Natural killer cell (primary cell): ENCODE measurements at regions of chr4 and their contacts with region 1.

Region 1: GRCh38 chr4:67871867-67872266 is 11.9 kb downstream of the TMPRSS11D start:
- DNase-seq: peak in 1 of 2 donors; percentile 2
- ATAC-seq: peak; percentile 76 to 93 (median 81)
- H3K4me3 ChIP-seq: no peak overlapping the region
- H3K4me3 Mint-ChIP-seq: no peak overlapping the region
- H3K27ac ChIP-seq: no peak overlapping the region
- H3K27ac Mint-ChIP-seq: no peak overlapping the region
- H3K4me1 ChIP-seq: no peaks in the 10 kb centered on the region
- H3K4me1 Mint-ChIP-seq: no peaks in the 10 kb centered on the region
- H3K27me3 ChIP-seq: no peaks in the 10 kb centered on the region
- H3K27me3 Mint-ChIP-seq: no peaks in the 10 kb centered on the region
- CTCF ChIP-seq: peak; percentile 60

Region 2: GRCh38 chr4:67483868-67484602 is 387.8 kb before region 1 on chr4:
- intact Hi-C with region 1: no loop called
- DNase-seq: no peak
- ATAC-seq: peak in 1 of 3 donors; percentile 18
- H3K4me3 ChIP-seq: no peak overlapping the region
- H3K4me3 Mint-ChIP-seq: no peak overlapping the region
- H3K27ac ChIP-seq: no peak overlapping the region
- H3K27ac Mint-ChIP-seq: no peak overlapping the region
- H3K4me1 ChIP-seq: no peaks in the 10 kb centered on the region
- H3K4me1 Mint-ChIP-seq: peaks cover 30% of the 10 kb centered on the region in 2 donors
- H3K27me3 ChIP-seq: no peaks in the 10 kb centered on the region
- H3K27me3 Mint-ChIP-seq: no peaks in the 10 kb centered on the region
- CTCF ChIP-seq: no peak

Region 3: DNA sequence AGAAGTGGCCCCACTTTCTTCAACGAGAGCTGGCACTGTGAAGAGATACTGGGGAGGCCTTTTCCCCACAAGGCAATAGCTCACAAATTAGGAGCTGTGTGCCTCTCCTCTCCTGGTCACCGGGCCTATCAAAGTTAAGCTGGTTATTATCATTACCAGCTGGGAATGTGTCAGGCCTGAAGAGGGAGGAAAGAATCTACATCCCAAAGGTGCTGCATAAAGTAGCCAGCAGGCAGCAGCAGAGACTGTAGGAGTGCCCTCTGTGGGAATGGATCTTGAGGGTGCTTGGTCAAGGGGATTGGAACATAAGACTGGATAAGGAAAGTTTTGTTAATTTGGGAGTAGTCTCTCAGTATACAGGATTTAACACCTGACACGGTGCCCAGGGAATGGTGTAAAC is 21.0 kb after region 1 on chr4:
- intact Hi-C with region 1: no loop called
- DNase-seq: no peak
- ATAC-seq: no peak
- H3K4me3 ChIP-seq: no peak overlapping the region
- H3K4me3 Mint-ChIP-seq: no peak overlapping the region
- H3K27ac ChIP-seq: no peak overlapping the region
- H3K27ac Mint-ChIP-seq: peak overlapping the region in 1 of 2 donors; percentile 12
- H3K4me1 ChIP-seq: no peaks in the 10 kb centered on the region
- H3K4me1 Mint-ChIP-seq: peaks cover 17 to 21% of the 10 kb centered on the region in 2 donors
- H3K27me3 ChIP-seq: no peaks in the 10 kb centered on the region
- H3K27me3 Mint-ChIP-seq: no peaks in the 10 kb centered on the region
- CTCF ChIP-seq: no peak

Region 4: DNA sequence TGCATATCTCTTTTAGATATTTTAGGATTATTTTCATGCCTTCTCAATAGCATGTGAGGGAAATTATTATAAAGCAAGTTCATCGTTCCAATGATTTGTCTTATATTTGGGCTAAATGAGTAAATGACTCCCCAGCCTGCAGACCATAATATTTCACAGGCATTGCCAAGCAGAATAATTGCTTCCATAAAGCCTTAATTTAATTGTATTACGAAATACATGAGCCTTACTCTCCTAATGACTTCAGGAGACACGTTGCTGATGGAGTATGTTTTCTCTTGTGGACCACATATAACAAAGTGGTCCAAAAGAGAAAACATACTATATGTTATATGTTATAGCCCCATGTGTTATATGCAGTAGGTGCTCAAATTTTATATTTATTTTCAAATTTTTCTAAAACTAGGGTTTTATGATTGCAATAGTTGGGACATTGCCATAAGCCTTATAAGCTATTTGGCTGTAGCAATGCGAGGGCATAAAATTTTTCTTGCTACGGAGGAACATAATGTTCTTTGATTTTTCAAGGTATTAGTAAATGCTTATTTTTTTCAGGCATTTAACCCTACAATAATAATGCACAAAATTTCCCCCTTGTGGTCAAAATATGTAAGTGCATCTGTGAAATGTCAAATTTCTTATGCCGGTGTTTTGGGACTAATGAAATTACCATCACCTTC is 38.2 kb after region 1 on chr4:
- intact Hi-C with region 1: loop called (anchors 1 kb)
- DNase-seq: peak in 1 of 2 donors; percentile 45
- ATAC-seq: no peak
- H3K4me3 ChIP-seq: no peak overlapping the region
- H3K4me3 Mint-ChIP-seq: no peak overlapping the region
- H3K27ac ChIP-seq: no peak overlapping the region
- H3K27ac Mint-ChIP-seq: no peak overlapping the region
- H3K4me1 ChIP-seq: no peaks in the 10 kb centered on the region
- H3K4me1 Mint-ChIP-seq: no peaks in the 10 kb centered on the region
- H3K27me3 ChIP-seq: no peaks in the 10 kb centered on the region
- H3K27me3 Mint-ChIP-seq: peaks cover 2 to 6% of the 10 kb centered on the region in 2 donors
- CTCF ChIP-seq: peak; percentile 82

Region 5: DNA sequence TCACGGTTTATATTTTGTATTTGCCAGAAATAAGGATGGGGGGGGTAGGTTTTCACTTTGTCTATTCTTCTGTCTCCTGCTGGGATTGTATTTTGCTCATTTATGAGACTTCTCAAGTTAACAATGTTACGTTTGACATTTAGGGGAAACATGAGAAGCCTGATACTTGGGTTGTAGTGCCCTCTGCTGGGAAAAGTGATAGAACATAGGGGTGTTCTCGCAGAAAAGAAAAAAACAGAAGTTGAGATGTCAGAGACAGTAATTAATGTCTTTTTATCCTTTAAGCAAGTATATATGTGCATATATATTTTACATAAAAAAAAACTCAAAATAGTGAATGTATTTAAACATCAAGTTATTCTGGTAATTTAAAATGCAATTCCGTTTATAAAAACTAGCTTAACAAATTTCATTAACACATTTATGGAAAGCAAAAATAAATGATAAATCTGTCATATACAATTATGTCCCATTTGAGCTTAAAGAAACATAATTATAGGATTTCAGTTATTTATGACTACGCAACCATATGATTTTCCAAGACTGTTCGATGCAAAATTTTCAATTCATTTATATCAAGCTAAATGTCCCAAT is 303.8 kb after region 1 on chr4:
- intact Hi-C with region 1: loop called (anchors 1 kb)
- DNase-seq: peak in 1 of 2 donors; percentile 55
- ATAC-seq: peak; percentile 46 to 62 (median 57)
- H3K4me3 ChIP-seq: no peak overlapping the region
- H3K4me3 Mint-ChIP-seq: no peak overlapping the region
- H3K27ac ChIP-seq: no peak overlapping the region
- H3K27ac Mint-ChIP-seq: no peak overlapping the region
- H3K4me1 ChIP-seq: no peaks in the 10 kb centered on the region
- H3K4me1 Mint-ChIP-seq: no peaks in the 10 kb centered on the region
- H3K27me3 ChIP-seq: no peaks in the 10 kb centered on the region
- H3K27me3 Mint-ChIP-seq: peaks cover 4 to 14% of the 10 kb centered on the region in 2 donors
- CTCF ChIP-seq: peak; percentile 71

Region 6: DNA sequence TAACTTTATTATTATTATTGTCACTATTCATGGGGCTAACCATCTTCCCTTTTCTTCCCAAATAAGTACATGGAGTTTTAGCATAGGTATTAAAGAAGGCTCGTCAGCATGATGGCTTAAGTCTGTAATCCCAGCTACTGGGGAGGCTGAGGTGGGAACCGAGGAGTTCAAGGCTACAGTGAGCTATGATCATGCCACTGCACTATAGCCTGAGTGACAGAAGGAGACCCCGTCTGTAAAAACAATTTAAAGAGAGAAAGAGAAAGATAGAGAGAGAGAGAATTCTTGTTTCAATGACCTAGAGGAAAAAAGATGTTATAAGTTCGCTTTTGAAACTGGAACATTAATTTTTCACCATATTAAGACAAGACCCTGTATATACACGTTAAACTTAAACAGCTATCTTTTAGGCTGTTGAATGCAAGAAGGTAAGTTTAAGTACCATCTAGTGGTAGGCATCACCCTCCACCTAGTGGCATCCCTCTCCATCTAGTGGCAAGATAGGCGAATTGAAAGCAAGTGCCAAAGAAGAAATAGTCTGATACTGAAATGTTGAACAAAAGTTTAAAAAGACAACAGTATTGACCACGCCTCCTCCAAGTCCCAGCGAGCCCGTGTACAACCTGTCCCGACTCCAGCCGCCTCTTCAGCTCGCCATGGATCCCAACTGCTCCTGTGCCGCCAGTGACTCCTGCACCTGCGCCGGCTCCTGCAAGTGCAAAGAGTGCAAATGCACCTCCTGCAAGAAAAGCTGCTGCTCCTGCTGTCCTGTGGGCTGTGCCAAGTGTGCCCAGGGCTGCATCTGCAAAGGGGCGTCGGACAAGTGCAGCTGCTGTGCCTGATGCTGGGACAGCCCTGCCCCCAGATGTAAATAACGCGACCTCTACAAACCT is 504.0 kb after region 1 on chr4:
- intact Hi-C with region 1: loop called (anchors 10 kb)
- DNase-seq: peak in 1 of 2 donors; percentile 80
- ATAC-seq: peak; percentile 82 to 92 (median 87)
- H3K4me3 ChIP-seq: no peak overlapping the region
- H3K4me3 Mint-ChIP-seq: no peak overlapping the region
- H3K27ac ChIP-seq: no peak overlapping the region
- H3K27ac Mint-ChIP-seq: no peak overlapping the region
- H3K4me1 ChIP-seq: peaks cover 9% of the 10 kb centered on the region
- H3K4me1 Mint-ChIP-seq: peaks cover 8 to 14% of the 10 kb centered on the region in 2 donors
- H3K27me3 ChIP-seq: no peaks in the 10 kb centered on the region
- H3K27me3 Mint-ChIP-seq: peaks cover 16 to 31% of the 10 kb centered on the region in 2 donors
- CTCF ChIP-seq: peak; percentile 82

Region 7: GRCh38 chr4:68426516-68426915 is 554.6 kb after region 1 on chr4:
- intact Hi-C with region 1: no loop called
- DNase-seq: no peak
- ATAC-seq: no peak
- H3K4me3 ChIP-seq: no peak overlapping the region
- H3K4me3 Mint-ChIP-seq: no peak overlapping the region
- H3K27ac ChIP-seq: no peak overlapping the region
- H3K27ac Mint-ChIP-seq: no peak overlapping the region
- H3K4me1 ChIP-seq: no peaks in the 10 kb centered on the region
- H3K4me1 Mint-ChIP-seq: no peaks in the 10 kb centered on the region
- H3K27me3 ChIP-seq: no peaks in the 10 kb centered on the region
- H3K27me3 Mint-ChIP-seq: peaks cover 0 to 9% of the 10 kb centered on the region in 2 donors
- CTCF ChIP-seq: no peak